Thyroid gland (tissue), 4 donors: ENCODE measurements at regions of chr11 and their contacts with region 1.

Region 1: GRCh38 chr11:10307442-10308207 is 2.8 kb downstream of the ADM start:
- DNase-seq: peak; percentile 82
- H3K4me3 ChIP-seq: peak overlapping the region in 2 of 3 donors; percentile 17 to 73
- H3K27ac ChIP-seq: peak overlapping the region in 2 of 3 donors; percentile 64 to 88
- H3K4me1 ChIP-seq: peaks cover 55 to 56% of the 10 kb centered on the region in 2 donors
- H3K27me3 ChIP-seq: no peaks in the 10 kb centered on the region
- CTCF ChIP-seq: peak; percentile 95 to 99 (median 97)
- POLR2A ChIP-seq: no peak

Region 2: GRCh38 chr11:9990221-9990975 is 317.2 kb before region 1 on chr11:
- intact Hi-C with region 1: loop called (anchors 5 kb)
- DNase-seq: peak; percentile 9 to 17
- H3K4me3 ChIP-seq: no peak overlapping the region
- H3K27ac ChIP-seq: no peak overlapping the region
- H3K4me1 ChIP-seq: no peaks in the 10 kb centered on the region
- H3K27me3 ChIP-seq: no peaks in the 10 kb centered on the region
- CTCF ChIP-seq: peak in 4 of 6 experiments; percentile 37 to 73 (median 48)
- POLR2A ChIP-seq: no peak

Region 3: DNA sequence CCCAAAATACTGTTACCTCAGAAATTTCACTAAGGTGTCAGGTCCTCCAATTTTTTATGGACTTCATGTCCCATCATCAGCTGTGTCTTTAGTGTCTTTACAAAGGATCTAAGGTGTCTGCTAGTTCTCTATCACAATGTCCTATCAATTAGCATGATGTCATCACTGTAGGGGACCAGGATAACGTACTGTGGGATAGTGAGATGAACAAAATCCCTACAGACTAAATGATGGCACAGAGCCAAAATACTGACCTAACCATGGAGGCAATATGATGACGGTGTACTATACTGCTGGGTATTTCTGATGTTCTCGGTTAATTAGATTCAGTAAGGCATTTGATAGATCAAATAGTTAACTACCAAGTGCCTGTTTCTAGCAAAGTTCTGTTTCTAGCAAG is 96.2 kb before region 1 on chr11:
- intact Hi-C with region 1: loop called (anchors 5 kb)
- DNase-seq: no peak
- H3K4me3 ChIP-seq: no peak overlapping the region
- H3K27ac ChIP-seq: no peak overlapping the region
- H3K4me1 ChIP-seq: no peaks in the 10 kb centered on the region
- H3K27me3 ChIP-seq: no peaks in the 10 kb centered on the region
- CTCF ChIP-seq: no peak
- POLR2A ChIP-seq: no peak

Region 4: GRCh38 chr11:10366568-10367370 is 59.1 kb after region 1 on chr11:
- intact Hi-C with region 1: no loop called
- DNase-seq: peak; percentile 70 to 76
- H3K4me3 ChIP-seq: no peak overlapping the region
- H3K27ac ChIP-seq: no peak overlapping the region
- H3K4me1 ChIP-seq: peaks cover 0 to 3% of the 10 kb centered on the region in 2 donors
- H3K27me3 ChIP-seq: no peaks in the 10 kb centered on the region
- CTCF ChIP-seq: peak; percentile 58 to 84 (median 76)
- POLR2A ChIP-seq: no peak